Dendritic cell treated with granulocyte-macrophage colony-stimulating factor and Interleukin-4, amounts not matched to agents 40 ng/mL and 50 ng/mL, for 4 days (primary cell): ENCODE measurements at regions of chrX and their contacts with region 1.

Region 1: GRCh38 chrX:110412971-110413721 is 54.5 kb downstream of the RTL9 start:
- H3K4me3 Mint-ChIP-seq: no peak overlapping the region
- H3K27ac Mint-ChIP-seq: no peak overlapping the region
- H3K4me1 Mint-ChIP-seq: peaks cover 8% of the 10 kb centered on the region
- H3K27me3 Mint-ChIP-seq: no peaks in the 10 kb centered on the region

Region 2: DNA sequence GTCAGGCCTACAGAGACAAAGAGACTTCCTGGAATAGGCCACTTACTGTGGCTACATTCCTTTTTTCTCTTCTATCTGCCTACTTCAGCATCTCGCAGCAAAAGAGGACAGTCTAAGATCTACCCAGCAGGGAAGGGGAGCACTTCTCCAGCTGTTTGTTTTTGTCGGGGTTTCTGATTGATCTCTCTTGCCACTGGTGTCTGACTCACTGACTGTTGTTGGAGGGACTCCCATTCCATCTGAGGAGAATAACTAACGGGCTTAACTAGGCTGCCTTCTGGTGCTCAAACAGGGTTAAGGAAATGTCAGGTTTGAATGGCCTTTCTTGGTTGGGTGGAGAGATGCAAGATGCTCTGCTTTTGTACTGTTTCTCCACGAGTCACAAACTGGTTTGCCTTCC is 510.5 kb before region 1 on chrX:
- intact Hi-C with region 1: loop called (anchors 10 kb)
- H3K4me3 Mint-ChIP-seq: no peak overlapping the region
- H3K27ac Mint-ChIP-seq: no peak overlapping the region
- H3K4me1 Mint-ChIP-seq: no peaks in the 10 kb centered on the region
- H3K27me3 Mint-ChIP-seq: no peaks in the 10 kb centered on the region

Region 3: DNA sequence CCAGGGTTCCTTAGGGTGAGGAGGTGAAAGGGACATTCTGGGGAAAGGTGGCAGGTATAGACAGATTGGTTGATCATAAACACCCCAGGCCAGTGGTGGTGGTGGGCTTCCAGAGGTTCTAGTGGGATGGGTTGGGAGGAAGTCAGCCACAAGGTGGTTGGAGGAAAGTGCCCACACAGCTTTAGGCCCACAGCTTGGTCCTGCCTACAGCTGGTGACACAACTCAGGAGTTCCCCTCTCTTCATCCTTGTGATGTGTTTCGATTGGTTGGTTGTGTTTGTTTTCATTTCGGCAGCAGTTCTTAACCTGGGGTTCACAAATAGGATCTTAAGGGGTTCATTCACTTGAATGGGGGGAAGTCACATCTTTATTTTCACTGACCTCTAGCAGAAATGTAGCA is 253.3 kb before region 1 on chrX:
- intact Hi-C with region 1: loop called (anchors 1 kb)
- H3K4me3 Mint-ChIP-seq: no peak overlapping the region
- H3K27ac Mint-ChIP-seq: peak overlapping the region; percentile 69
- H3K4me1 Mint-ChIP-seq: peaks cover 37% of the 10 kb centered on the region
- H3K27me3 Mint-ChIP-seq: no peaks in the 10 kb centered on the region